H1 (cell line): ENCODE measurements at regions of chr11 and their contacts with region 1.

Region 1: GRCh38 chr11:20022363-20023081 is 137.8 kb downstream of the DBX1 start:
- DNase-seq: peak in 1 of 2 experiments; percentile 70
- H3K4me3 ChIP-seq: peak overlapping the region; percentile 43 to 66 (median 56)
- H3K27ac ChIP-seq: peak overlapping the region; percentile 50; the same call in 1 of the 2 replicates
- H3K4me1 ChIP-seq: peaks cover 17 to 44% (median 42%) of the 10 kb centered on the region in 4 experiments
- H3K27me3 ChIP-seq: no peaks in the 10 kb centered on the region
- CTCF ChIP-seq: no peak
- EP300 ChIP-seq: no peak
- POLR2A ChIP-seq: no peak
- RAD21 ChIP-seq: peak; percentile 10 to 19; a peak in 2 of 4 replicates

Region 2: DNA sequence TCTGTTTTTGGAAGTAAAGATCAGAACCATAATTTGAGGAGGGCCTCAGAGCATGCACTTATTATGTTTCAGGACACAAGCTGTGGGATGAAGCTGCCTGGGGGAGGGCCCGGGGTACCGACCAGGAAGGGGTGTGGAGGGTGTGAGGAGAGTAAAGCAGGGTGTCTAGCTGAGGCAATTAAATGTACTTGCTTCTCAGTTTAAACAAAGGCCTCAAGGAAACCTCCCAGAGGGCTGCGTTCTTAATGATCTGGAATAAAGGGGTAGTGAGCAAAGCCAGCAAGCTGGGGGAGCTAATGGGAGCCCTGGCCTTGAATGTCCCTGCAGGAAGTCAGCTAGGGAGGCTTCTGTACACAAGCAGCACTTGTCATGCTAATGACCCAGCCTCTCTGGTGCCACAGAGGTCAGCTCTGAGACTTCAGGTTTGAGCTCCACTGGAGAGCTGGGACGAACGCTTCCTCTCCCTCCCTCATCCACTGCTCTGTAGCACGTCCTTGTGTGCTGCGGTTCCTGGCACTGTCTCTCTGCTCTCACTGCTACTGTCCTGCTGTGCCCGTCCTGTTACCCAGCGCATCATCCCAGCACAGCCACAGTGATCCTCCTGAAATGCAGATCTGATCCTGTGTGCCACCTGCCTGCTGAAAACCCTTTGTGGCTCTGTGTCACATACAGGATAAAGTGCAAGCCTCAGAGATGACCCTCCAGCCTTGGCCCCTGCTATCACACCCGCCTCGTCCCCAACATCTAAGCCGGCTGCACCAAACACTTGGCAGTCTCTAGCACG is 22.0 kb before region 1 on chr11:
- CTCF ChIA-PET with region 1: interaction called, 20 read pairs
- POLR2A ChIA-PET with region 1: interaction called, 14 read pairs
- DNase-seq: peak; percentile 72 to 96
- H3K4me3 ChIP-seq: peak overlapping the region in 2 of 4 experiments; percentile 17 to 35; a peak in 3 of 8 replicates
- H3K27ac ChIP-seq: no peak overlapping the region
- H3K4me1 ChIP-seq: peaks cover 14 to 30% (median 20%) of the 10 kb centered on the region in 4 experiments
- H3K27me3 ChIP-seq: peaks cover 0 to 18% (median 15%) of the 10 kb centered on the region in 4 experiments; a peak in 6 of 7 replicates
- CTCF ChIP-seq: peak in 1 of 3 experiments; percentile 27; a peak in 1 of 4 replicates
- EP300 ChIP-seq: no peak
- POLR2A ChIP-seq: 0 out of 3 replicates have a peak, but pooled peaks of 1 of the 2 experiments have one; percentile 35
- RAD21 ChIP-seq: peak; percentile 3 to 29; a peak in 2 of 4 replicates

Region 3: GRCh38 chr11:20050551-20051333 is 28.2 kb after region 1 on chr11:
- CTCF ChIA-PET with region 1: interaction called, 99 read pairs
- POLR2A ChIA-PET with region 1: interaction called, 6 read pairs
- DNase-seq: no peak
- H3K4me3 ChIP-seq: peak overlapping the region in 3 of 4 experiments; percentile 4 to 26 (median 11); a peak in 3 of 8 replicates
- H3K27ac ChIP-seq: no peak overlapping the region
- H3K4me1 ChIP-seq: peaks cover 13 to 24% (median 18%) of the 10 kb centered on the region in 4 experiments
- H3K27me3 ChIP-seq: no peaks in the 10 kb centered on the region
- CTCF ChIP-seq: no peak
- EP300 ChIP-seq: no peak
- POLR2A ChIP-seq: no peak
- RAD21 ChIP-seq: 0 out of 4 replicates have a peak, but pooled peaks of 1 of the 2 experiments have one; percentile 4

Region 4: GRCh38 chr11:20066013-20066782 is 43.7 kb after region 1 on chr11:
- CTCF ChIA-PET with region 1: interaction called, 16 read pairs
- POLR2A ChIA-PET with region 1: interaction called, 5 read pairs
- DNase-seq: no peak
- H3K4me3 ChIP-seq: no peak overlapping the region
- H3K27ac ChIP-seq: no peak overlapping the region
- H3K4me1 ChIP-seq: peaks cover 0 to 16% (median 14%) of the 10 kb centered on the region in 4 experiments; a peak in 6 of 7 replicates
- H3K27me3 ChIP-seq: no peaks in the 10 kb centered on the region
- CTCF ChIP-seq: no peak
- EP300 ChIP-seq: no peak
- POLR2A ChIP-seq: no peak
- RAD21 ChIP-seq: no peak